Motor neuron (in vitro differentiated cells): ENCODE measurements at regions of chr14 and their contacts with region 1.

Region 1: DNA sequence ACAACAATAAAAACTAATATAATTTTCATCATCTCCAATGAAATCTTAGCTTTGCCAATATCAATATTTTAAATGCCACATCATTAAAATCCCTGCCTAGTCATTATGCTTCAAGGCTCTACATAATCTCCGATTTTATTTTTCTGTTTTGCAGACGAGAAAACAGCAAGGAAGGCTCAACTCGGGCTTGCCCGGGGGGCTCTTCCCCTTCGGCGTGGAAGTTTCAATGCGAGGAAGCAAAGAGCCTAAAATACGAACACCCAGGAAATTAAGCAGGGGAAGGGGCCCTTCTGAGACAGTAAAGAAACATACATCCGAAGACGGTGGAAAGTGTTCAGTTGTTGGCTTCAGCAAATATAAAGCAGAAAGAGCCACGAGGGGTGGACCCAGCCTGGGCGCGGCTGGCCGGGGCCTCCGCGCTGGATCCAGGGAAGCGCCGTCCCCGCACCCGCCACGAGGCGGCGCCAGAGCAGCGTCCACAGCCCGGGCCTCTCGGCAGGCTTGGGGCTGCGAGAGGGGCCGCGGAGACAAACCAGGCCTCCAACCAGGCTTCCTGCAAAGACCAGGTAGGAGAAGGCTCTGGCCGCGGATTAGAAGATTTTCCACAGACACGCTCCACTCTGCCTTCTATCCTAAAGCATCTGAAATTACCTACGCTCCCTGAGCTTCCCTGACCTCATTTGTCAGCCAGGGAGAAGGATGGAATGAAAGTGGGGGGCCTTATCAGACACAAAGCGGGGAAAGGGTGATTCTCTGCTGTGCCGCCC is 77.2 kb downstream of the SERPINA3 start:
- ATAC-seq: peak; percentile 84 to 100 (median 98)
- H3K4me3 ChIP-seq: no peak overlapping the region
- H3K27ac ChIP-seq: no peak overlapping the region
- H3K4me1 ChIP-seq: peaks cover 0 to 5% of the 10 kb centered on the region in 2 donors

Region 2: GRCh38 chr14:95098984-95099599 is 409.7 kb after region 1 on chr14:
- in situ Hi-C with region 1: loop called in 6 of 9 experiments (anchors 10 to 25 kb)
- ATAC-seq: peak; percentile 50 to 96 (median 76)
- H3K4me3 ChIP-seq: no peak overlapping the region
- H3K27ac ChIP-seq: no peak overlapping the region
- H3K4me1 ChIP-seq: peaks cover 18 to 33% of the 10 kb centered on the region in 2 donors

Region 3: DNA sequence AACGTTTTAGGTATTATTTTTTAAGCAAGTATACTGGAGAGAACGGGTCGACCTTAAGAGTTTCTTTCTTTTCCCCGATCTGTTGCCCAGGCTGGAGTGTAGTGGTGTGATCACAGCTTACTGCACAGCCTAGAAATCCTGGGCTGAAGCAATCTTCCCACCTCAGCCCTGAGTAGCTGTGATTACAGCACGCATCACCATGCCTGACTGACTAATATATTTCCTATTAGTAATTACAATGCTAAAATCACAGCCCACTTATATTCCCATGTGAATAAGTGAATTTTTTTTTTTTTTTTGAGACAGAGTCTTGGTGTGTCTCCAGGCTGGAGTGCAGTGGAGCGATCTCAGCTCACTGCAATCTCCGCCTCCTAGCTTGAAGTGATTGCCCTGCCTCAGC is 417.6 kb after region 1 on chr14:
- in situ Hi-C with region 1: loop called in 2 of 9 experiments (anchors 10 to 25 kb)
- ATAC-seq: no peak
- H3K4me3 ChIP-seq: no peak overlapping the region
- H3K27ac ChIP-seq: no peak overlapping the region
- H3K4me1 ChIP-seq: no peaks in the 10 kb centered on the region

Region 4: GRCh38 chr14:95123891-95124579 is 434.6 kb after region 1 on chr14:
- in situ Hi-C with region 1: loop called in 1 of 9 experiments (anchors 25 kb)
- ATAC-seq: no peak
- H3K4me3 ChIP-seq: no peak overlapping the region
- H3K27ac ChIP-seq: no peak overlapping the region
- H3K4me1 ChIP-seq: peaks cover 8 to 12% of the 10 kb centered on the region in 2 donors

Region 5: DNA sequence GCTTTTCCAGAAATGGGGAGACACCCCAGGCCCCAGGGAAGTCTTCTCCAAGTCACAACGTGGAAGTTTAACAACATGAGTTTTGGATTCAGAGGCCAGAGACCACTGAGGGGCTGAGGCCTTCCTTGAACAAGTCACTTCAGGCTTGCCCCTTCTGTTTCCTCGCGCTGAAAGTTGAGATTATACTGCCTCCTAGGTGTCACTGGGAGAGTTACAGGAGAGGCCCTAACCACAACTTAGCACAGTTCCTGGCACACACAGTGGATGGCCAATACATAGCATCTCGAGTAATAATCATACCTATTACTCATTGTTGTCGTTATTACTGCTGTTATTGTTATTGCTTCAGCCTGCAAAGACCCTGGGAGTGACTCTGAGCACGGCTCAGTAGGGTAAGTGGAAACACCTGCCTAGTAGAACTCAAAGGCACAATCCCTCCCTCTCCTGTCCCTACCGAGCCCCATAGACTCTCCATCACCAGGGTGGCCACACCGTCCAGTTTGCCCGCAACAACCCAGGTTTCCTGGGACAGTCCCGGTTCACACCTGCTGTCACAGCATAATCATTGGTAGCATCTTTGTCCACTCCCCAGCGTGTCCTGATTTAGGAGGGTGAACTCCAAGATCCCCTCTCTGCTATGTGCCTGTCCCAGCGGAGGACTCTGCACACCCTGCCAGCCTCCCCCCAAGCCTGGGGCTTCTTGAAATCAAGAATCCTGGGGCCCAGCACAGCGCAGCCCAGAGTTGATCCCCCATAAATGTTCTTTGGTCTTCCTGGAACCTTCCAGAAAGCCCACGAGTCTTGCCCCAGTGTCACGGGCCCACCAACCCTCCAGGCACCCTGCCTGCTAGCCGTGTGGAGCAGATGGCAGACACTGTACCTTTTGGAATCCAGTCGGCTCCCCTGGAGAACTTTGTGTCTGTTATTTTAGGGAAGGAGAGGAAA is 742.1 kb after region 1 on chr14:
- in situ Hi-C with region 1: loop called in 8 of 9 experiments (anchors 5 to 25 kb)
- ATAC-seq: peak in 7 of 8 experiments; percentile 40 to 77 (median 59)
- H3K4me3 ChIP-seq: no peak overlapping the region
- H3K27ac ChIP-seq: no peak overlapping the region
- H3K4me1 ChIP-seq: peaks cover 0 to 2% of the 10 kb centered on the region in 2 donors

Region 6: GRCh38 chr14:95442633-95443021 is 753.2 kb after region 1 on chr14:
- in situ Hi-C with region 1: loop called in 7 of 9 experiments (anchors 10 to 25 kb)
- ATAC-seq: peak; percentile 99 to 100 (median 100)
- H3K4me3 ChIP-seq: no peak overlapping the region
- H3K27ac ChIP-seq: no peak overlapping the region
- H3K4me1 ChIP-seq: no peaks in the 10 kb centered on the region